ENCODE measurements at regions of chr4 and their contacts with region 1.

Region 1: GRCh38 chr4:68349649-68350360 is at the start of gene YTHDC1:
- DNase-seq: peak; percentile 98
- H3K4me3 Mint-ChIP-seq: peak within 1 kb of the TSS; percentile 88
- H3K27ac Mint-ChIP-seq: peak within 1 kb of the TSS; percentile 93
- H3K4me1 Mint-ChIP-seq: peaks cover 23% of the 10 kb centered on the region
- H3K27me3 Mint-ChIP-seq: peaks cover 15% of the 10 kb centered on the region
- total RNA-seq, gene YTHDC1: 79.9 and 83.9 TPM in 2 replicates

Region 2: GRCh38 chr4:67522851-67523671 is 826.7 kb before region 1 on chr4:
- intact Hi-C with region 1: loop called (anchors 5 kb)
- DNase-seq: peak; percentile 69
- H3K4me3 Mint-ChIP-seq: peak overlapping the region; percentile 66
- H3K27ac Mint-ChIP-seq: peak overlapping the region; percentile 97
- H3K4me1 Mint-ChIP-seq: peaks cover 55% of the 10 kb centered on the region
- H3K27me3 Mint-ChIP-seq: no peaks in the 10 kb centered on the region

Region 3: DNA sequence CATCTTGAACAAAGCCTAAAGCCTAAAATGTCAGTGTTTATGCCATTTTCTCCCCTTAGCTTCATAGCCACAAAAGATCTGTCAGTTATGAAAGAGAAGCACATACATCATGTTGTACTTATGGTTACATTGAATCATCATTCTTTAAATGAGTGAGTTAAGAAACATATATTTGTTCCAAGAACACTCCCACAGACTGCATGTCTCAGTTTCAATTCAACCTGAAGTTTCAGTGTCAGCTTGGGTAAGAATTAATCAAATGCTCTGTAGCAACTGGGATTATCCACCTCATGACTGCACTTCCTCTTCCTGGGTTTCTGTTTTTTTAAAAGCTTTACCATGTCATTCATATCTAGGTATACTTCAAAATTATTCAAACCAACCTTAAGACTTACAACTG is 100.4 kb before region 1 on chr4:
- intact Hi-C with region 1: loop called (anchors 1 kb)
- DNase-seq: no peak
- H3K4me3 Mint-ChIP-seq: peak overlapping the region; percentile 64
- H3K27ac Mint-ChIP-seq: peak overlapping the region; percentile 93
- H3K4me1 Mint-ChIP-seq: peaks cover 10% of the 10 kb centered on the region
- H3K27me3 Mint-ChIP-seq: no peaks in the 10 kb centered on the region

Region 4: DNA sequence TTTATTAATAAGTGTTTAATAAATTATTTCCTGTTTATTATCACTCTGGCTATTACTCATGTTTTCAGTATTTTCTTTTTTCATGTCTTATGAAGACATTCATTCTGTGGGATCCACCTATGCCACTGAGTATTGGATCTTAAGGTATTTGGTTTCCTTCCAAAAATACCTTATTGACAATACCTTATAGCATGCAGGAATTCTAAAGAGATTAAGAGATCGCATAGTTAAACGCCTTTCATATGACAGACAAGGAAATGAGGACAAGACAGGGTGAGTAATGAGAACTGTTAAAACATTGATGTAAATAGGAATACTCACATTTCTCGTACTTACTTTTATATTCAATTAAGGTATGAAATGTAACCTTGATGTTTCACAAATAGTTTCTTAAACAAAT is 66.1 kb before region 1 on chr4:
- intact Hi-C with region 1: no loop called
- DNase-seq: no peak
- H3K4me3 Mint-ChIP-seq: no peak overlapping the region
- H3K27ac Mint-ChIP-seq: no peak overlapping the region
- H3K4me1 Mint-ChIP-seq: no peaks in the 10 kb centered on the region
- H3K27me3 Mint-ChIP-seq: peaks cover 5% of the 10 kb centered on the region

Region 5: DNA sequence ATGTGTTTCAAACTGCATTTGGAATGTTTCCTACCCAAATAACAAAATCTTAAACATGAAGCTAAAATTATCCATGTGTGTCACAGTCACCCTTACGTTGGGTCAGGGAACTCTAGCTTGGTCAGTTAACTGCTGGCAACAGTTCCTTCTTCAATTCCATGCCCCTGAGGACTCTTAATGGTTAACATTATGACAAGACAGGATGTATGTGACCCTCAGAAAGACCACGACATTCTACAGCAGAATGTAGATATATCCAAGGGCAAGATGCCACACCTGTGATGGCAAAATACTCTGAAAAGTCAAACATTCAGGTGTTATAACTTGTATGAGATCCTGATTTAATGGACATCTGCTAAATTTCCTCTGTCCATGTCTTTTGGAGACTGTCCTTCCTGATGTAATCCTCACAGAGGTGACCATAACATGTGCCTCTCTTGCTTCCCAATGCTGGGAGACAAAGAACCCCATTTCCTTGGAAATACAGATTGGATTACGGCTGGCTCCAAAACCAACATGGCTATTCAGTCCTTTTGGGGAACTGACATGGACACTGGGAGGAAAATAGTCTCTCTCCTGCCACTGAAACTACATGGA is 39.1 kb before region 1 on chr4:
- intact Hi-C with region 1: loop called (anchors 5 kb)
- DNase-seq: no peak
- H3K4me3 Mint-ChIP-seq: no peak overlapping the region
- H3K27ac Mint-ChIP-seq: no peak overlapping the region
- H3K4me1 Mint-ChIP-seq: no peaks in the 10 kb centered on the region
- H3K27me3 Mint-ChIP-seq: peaks cover 7% of the 10 kb centered on the region

Region 6: GRCh38 chr4:68375667-68376559 is 26.1 kb after region 1 on chr4:
- intact Hi-C with region 1: loop called (anchors 1 kb)
- DNase-seq: peak; percentile 85
- H3K4me3 Mint-ChIP-seq: peak overlapping the region; percentile 82
- H3K27ac Mint-ChIP-seq: no peak overlapping the region
- H3K4me1 Mint-ChIP-seq: peaks cover 15% of the 10 kb centered on the region
- H3K27me3 Mint-ChIP-seq: peaks cover 32% of the 10 kb centered on the region

Measured in activated CD4-positive, alpha-beta T cell treated with anti-CD3 and anti-CD28 coated beads, Interleukin-2, amount 10 ng/mL, durations not matched to agents 24 days and 14 days (primary cell).